Psoas muscle (tissue), 8 donors: ENCODE measurements at regions of chr3 and their contacts with region 1.

Region 1: GRCh38 chr3:152322756-152323155 is 54.0 kb downstream of the MBNL1 start:
- DNase-seq: no peak
- ATAC-seq: peak; percentile 27 to 62 (median 42)
- H3K4me3 ChIP-seq: peak overlapping the region; percentile 44
- H3K27ac ChIP-seq: peak overlapping the region; percentile 78
- H3K4me1 ChIP-seq: peaks cover 82% of the 10 kb centered on the region
- H3K27me3 ChIP-seq: no peaks in the 10 kb centered on the region
- CTCF ChIP-seq: no peak

Region 2: DNA sequence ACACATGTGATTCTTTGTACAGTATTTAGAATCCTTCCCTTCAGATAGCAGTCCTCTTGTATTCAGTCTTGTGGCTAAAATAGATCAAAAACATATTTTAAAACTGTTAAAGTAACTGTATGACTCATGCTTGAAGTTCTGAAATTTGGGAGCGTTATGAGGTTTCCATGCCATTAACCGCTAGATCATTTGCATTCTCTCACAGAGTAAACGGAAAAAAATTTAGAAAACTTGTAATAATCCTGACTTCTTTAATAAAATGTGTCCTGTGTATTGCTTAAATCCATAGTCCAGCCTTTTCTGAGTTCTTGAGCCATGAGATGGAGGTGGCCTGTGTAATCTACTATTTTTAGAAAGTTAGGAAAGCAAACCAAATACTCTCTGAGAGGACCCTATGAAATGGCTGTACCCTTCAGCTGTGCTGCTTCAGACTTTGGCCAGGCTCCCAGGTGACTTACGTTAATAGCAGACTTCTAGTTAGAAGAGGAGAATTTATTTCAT is 20.2 kb before region 1 on chr3:
- intact Hi-C with region 1: loop called in 1 of 2 experiments (anchors 2 kb)
- DNase-seq: peak; percentile 40 to 70
- ATAC-seq: peak; percentile 70 to 82 (median 76)
- H3K4me3 ChIP-seq: peak overlapping the region; percentile 70
- H3K27ac ChIP-seq: peak overlapping the region; percentile 94
- H3K4me1 ChIP-seq: peaks cover 54% of the 10 kb centered on the region
- H3K27me3 ChIP-seq: no peaks in the 10 kb centered on the region
- CTCF ChIP-seq: no peak